Activated naive CD4-positive, alpha-beta T cell treated with anti-CD3 and anti-CD28 coated beads for 36 hours (primary cell): ENCODE measurements at regions of chr11 and their contacts with region 1.

Region 1: DNA sequence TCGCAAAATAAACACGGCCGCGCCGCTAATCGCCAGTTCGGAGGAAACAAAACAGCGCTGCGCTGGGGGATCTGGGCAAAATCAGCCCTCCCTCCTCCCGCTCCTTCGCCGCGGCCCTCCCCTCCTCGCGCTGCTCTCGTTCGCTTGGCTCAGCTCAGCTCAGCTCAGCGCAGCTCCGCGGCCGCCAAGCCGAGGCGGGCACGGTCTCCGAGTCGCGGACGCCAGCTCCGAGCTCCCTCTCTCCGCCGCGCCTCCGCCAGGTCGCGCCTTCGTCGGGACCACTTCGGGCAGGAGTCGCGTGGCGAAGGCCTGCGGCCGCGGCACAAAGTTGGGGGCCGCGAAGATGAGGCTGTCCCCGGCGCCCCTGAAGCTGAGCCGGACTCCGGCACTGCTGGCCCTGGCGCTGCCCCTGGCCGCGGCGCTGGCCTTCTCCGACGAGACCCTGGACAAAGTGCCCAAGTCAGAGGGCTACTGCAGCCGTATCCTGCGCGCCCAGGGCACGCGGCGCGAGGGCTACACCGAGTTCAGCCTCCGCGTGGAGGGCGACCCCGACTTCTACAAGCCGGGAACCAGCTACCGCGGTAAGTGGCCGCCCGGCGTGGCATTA is at the start of gene SPON1:
- DNase-seq: peak; percentile 67
- H3K4me3 Mint-ChIP-seq: peak within 1 kb of the TSS; percentile 70
- H3K27ac Mint-ChIP-seq: no peak within 1 kb of the TSS
- H3K4me1 Mint-ChIP-seq: peaks cover 7% of the 10 kb centered on the region
- H3K27me3 Mint-ChIP-seq: peaks cover 39% of the 10 kb centered on the region
- total RNA-seq, gene SPON1: 0.24 to 0.25 TPM

Region 2: DNA sequence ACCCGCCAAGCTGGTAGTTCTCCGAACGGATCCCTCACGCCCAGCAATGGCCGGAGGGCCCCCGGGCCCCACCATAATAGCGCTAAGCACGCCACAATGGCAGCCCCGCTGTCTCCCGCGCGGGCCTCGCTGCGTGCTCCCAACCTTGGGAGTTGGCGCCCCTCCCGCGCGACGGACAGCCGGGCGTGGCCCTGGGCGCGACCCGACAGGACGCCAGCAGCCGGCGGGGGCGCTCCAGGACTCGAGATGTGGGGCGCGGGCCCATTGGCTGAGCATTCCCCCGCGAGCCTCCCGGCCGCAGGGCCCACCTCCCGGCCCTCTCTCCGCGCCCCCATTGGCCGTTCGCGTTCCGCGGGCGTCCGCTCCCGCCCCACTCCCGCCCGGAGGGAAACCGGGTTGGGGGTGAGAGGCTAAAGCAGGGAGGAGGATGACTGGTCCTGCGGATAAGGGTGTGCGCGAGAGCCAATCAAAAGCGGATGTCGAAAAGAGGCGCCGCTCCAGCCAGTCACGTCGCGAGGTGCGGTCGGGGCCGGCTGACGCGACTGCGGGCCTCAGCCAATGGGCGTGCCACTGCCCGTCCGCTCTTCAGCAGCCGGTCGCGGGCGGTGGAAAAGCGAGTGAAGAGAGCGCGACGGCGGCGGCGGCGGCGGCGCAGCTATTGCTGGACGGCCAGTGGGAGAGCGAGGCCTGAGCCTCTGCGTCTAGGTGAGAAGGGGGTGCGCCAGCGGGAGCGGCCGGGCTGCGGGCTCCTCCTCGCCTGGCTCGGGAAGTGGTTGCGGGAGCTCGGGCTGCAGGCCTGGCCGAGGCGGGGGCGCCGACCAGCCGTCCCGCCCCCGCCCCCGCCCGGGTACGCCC is 294.3 kb before region 1 on chr11 and contains the start of gene FAR1:
- CTCF ChIA-PET with region 1: no interaction called
- intact Hi-C with region 1: loop called (anchors 5 kb)
- DNase-seq: peak; percentile 98
- H3K4me3 Mint-ChIP-seq: peak within 1 kb of the TSS; percentile 95
- H3K27ac Mint-ChIP-seq: peak within 1 kb of the TSS; percentile 92
- H3K4me1 Mint-ChIP-seq: peaks cover 40% of the 10 kb centered on the region
- H3K27me3 Mint-ChIP-seq: peaks cover 7% of the 10 kb centered on the region
- total RNA-seq, gene FAR1: 37.2 to 42.3 TPM

Region 3: GRCh38 chr11:13772223-13773046 is 190.2 kb before region 1 on chr11:
- CTCF ChIA-PET with region 1: interaction called, 14 read pairs
- intact Hi-C with region 1: no loop called
- DNase-seq: peak; percentile 35
- H3K4me3 Mint-ChIP-seq: no peak overlapping the region
- H3K27ac Mint-ChIP-seq: no peak overlapping the region
- H3K4me1 Mint-ChIP-seq: no peaks in the 10 kb centered on the region
- H3K27me3 Mint-ChIP-seq: no peaks in the 10 kb centered on the region

Region 4: DNA sequence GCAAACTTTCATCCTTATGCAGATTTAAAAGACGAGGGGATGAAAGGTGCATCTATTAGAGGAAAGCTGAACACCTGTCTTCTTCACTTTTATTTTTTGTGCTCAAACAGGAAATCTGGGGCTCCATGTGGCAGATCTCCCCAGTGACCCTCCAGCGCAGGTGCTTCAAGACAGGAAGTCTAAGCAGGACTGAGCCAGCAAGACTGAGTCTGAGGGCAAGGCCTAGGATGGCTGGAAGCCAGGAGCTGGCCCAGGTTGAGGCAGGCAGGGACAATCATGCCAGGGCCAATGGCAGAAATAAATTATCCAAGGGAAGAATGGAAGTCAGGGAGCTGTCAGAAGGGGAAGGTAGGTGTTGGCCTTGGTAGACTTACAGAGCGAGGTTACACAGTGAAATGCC is 101.3 kb before region 1 on chr11:
- CTCF ChIA-PET with region 1: no interaction called
- intact Hi-C with region 1: loop called (anchors 2 kb)
- DNase-seq: peak; percentile 45
- H3K4me3 Mint-ChIP-seq: no peak overlapping the region
- H3K27ac Mint-ChIP-seq: peak overlapping the region; percentile 43
- H3K4me1 Mint-ChIP-seq: peaks cover 34% of the 10 kb centered on the region
- H3K27me3 Mint-ChIP-seq: no peaks in the 10 kb centered on the region